ENCODE measurements at regions of chr19 and their contacts with region 1.

Region 1: GRCh38 chr19:45523642-45524256 is 16.5 kb downstream of the VASP start:
- DNase-seq: peak; percentile 82 to 96
- H3K4me3 ChIP-seq: no peak overlapping the region
- CTCF ChIP-seq: no peak
- POLR2A ChIP-seq: no peak

Region 2: GRCh38 chr19:45469132-45469944 is 54.4 kb before region 1 on chr19:
- intact Hi-C with region 1: no loop called
- DNase-seq: peak; percentile 93 to 99
- H3K4me3 ChIP-seq: peak overlapping the region; percentile 34
- CTCF ChIP-seq: no peak
- POLR2A ChIP-seq: peak in 1 of 2 donors; percentile 41

Region 3: DNA sequence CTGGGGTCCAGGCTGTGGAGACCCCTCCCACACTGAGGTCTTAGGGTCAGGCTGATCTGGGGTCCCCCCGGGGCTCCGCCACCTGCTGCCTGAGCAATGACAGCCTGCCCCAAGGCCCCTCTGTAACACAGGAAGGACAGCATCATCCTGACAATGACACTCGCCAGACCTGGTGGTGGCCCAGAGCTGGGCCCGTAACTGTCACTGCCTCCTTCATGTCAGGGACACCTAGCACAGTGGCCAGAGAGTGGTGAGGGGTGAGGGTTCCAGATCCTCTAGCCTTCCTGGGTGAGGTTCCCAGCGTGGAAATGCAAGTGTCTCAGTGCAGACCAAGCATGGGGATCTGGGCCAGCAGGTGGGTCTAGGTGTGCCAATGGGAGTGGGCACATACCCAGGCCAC is 33.1 kb after region 1 on chr19:
- intact Hi-C with region 1: loop called (anchors 2 kb)
- DNase-seq: no peak
- H3K4me3 ChIP-seq: no peak overlapping the region
- CTCF ChIP-seq: no peak
- POLR2A ChIP-seq: no peak

Region 4: GRCh38 chr19:45779231-45780145 is 255.7 kb after region 1 on chr19:
- intact Hi-C with region 1: no loop called
- DNase-seq: peak; percentile 91 to 97
- H3K4me3 ChIP-seq: no peak overlapping the region
- CTCF ChIP-seq: peak in 1 of 3 donors; percentile 75
- POLR2A ChIP-seq: no peak

Region 5: GRCh38 chr19:45842198-45842597 is 318.4 kb after region 1 on chr19:
- intact Hi-C with region 1: no loop called
- DNase-seq: no peak
- H3K4me3 ChIP-seq: no peak overlapping the region
- CTCF ChIP-seq: no peak
- POLR2A ChIP-seq: no peak